ENCODE measurements at regions of chr1 and their contacts with region 1.

Region 1: GRCh38 chr1:110106013-110106941 is 6.0 kb upstream of the UBL4B start:
- DNase-seq: peak; percentile 78
- H3K4me3 ChIP-seq: no peak overlapping the region
- H3K27ac ChIP-seq: no peak overlapping the region
- H3K4me1 ChIP-seq: peaks cover 18% of the 10 kb centered on the region
- CTCF ChIP-seq: peak; percentile 90

Region 2: DNA sequence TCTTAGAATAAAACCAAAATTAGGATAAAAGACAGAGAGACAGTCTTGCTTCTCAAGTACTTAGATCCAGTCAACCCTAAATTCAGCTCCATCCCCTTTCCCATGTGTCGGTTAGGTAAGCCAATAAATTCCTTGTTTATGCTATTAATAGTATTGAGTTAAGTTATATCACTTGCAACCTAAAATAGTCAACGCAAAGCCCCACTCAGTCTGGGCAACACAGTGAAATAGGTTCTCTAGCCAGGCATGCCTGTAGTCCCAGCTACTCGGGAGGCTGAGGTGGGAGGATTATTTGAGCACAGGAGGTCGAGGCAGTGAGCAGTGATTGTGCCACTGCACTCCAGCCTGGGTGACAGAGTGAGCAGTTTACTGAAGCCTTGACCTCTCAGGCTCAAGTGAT is 1045.1 kb before region 1 on chr1:
- CTCF ChIA-PET with region 1: no interaction called
- POLR2A ChIA-PET with region 1: no interaction called
- intact Hi-C with region 1: no loop called
- DNase-seq: no peak
- H3K4me3 ChIP-seq: no peak overlapping the region
- H3K27ac ChIP-seq: no peak overlapping the region
- H3K4me1 ChIP-seq: no peaks in the 10 kb centered on the region
- CTCF ChIP-seq: no peak

Region 3: DNA sequence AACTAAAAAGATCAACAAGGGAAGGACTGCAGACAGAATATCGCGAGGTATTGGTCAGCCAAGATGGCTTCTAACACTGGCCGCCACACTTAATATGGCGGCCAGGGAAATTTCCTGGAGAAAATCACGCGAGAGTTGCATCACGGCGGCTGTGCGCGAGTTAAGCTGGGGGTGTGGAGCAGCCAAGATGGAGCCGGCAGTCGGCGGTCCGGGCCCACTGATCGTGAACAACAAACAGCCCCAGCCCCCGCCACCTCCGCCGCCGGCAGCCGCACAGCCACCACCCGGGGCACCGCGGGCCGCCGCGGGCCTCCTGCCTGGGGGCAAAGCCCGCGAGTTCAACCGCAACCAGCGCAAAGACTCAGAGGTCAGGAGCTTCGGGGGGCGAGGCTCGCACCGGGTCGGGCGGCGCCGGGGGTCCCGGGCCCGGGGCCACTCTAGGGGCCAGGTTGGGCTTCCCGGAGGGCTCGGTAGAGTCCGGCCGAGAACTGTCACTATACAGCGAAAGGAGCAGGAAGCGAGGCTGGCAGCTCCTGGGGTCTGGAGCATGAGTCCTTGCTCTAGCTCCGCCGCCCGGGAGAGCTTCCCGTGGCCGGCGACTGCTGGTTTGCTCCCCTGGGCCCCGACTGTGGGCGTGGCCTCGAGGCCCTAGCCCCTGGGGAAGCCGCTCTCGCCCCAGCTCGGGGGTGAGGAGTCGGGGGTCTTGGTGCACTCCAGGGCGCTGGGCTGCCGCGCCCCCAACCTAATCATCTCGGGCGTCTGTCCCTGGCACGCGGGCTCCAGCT is 71.6 kb before region 1 on chr1 and contains the start of gene STRIP1:
- CTCF ChIA-PET with region 1: no interaction called
- POLR2A ChIA-PET with region 1: interaction called, 3 read pairs
- intact Hi-C with region 1: loop called (anchors 1 kb)
- DNase-seq: peak; percentile 97
- H3K4me3 ChIP-seq: peak within 1 kb of the TSS; percentile 95
- H3K27ac ChIP-seq: peak within 1 kb of the TSS; percentile 43
- H3K4me1 ChIP-seq: peaks cover 37% of the 10 kb centered on the region
- CTCF ChIP-seq: no peak
- total RNA-seq, gene STRIP1: 33.1 and 45.5 TPM in 2 replicates

Region 4: DNA sequence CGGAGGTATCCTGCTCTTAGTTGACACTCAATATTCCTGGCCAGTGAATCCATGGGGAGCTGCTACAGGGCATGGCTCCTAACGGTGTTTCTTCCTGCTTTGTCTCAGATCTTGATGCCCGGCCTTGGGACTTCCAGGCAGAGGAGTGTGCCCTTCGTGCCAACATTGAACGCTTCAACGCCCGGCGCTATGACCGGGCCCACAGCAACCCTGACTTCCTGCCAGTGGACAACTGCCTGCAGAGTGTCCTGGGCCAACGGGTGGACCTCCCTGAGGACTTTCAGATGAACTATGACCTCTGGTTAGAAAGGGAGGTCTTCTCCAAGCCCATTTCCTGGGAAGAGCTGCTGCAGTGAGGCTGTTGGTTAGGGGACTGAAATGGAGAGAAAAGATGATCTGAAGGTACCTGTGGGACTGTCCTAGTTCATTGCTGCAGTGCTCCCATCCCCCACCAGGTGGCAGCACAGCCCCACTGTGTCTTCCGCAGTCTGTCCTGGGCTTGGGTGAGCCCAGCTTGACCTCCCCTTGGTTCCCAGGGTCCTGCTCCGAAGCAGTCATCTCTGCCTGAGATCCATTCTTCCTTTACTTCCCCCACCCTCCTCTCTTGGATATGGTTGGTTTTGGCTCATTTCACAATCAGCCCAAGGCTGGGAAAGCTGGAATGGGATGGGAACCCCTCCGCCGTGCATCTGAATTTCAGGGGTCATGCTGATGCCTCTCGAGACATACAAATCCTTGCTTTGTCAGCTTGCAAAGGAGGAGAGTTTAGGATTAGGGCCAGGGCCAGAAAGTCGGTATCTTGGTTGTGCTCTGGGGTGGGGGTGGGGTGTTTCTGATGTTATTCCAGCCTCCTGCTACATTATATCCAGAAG is 52.5 kb before region 1 on chr1:
- CTCF ChIA-PET with region 1: interaction called, 7 read pairs
- POLR2A ChIA-PET with region 1: interaction called, 5 read pairs
- intact Hi-C with region 1: loop called (anchors 1 kb)
- DNase-seq: peak; percentile 63
- H3K4me3 ChIP-seq: no peak overlapping the region
- H3K27ac ChIP-seq: no peak overlapping the region
- H3K4me1 ChIP-seq: no peaks in the 10 kb centered on the region
- CTCF ChIP-seq: peak; percentile 96

Region 5: DNA sequence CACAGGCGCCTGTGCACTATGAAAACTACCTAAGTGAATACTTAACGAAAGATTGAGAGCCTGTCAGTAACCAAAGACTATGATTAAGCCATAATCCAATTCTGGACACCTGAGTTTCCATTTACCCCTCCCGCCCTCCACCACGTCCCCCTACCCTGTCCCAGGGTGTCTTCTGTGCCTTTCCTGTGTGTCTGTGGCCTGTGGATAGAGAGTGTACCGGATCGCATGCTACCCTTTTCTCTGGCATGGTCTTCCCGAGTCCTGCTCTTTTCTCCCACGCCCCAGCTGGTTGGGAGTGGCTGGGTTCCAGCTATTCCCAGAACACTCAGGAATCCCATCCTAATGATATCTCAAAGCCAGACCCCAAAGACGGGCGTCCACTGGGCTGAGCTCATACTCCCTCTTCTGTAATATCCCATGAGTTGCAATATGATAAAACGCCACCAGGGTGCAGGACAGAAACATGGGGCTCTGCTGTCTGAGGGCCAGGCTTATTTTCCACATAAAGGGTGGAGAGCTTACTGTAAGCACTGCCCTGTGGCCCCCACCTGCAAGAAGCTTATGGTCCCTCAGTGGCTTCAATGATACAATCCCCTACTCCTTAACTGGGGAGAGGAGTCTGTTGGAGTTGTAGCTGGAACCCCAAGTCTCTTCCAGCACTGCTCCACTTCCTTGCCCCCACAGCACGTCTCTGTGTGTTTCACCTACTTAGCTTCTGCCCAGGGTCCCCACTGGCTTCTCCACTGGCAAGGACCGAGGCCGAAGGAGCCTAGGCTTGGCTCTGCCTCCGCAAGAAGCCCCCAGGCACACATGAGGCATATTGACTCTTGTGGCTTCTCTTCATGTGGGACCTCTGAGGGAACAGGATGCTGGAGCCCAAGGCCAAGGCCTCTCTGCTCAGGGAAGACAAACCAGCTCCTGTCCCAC is 18.2 kb before region 1 on chr1:
- CTCF ChIA-PET with region 1: interaction called, 18 read pairs
- POLR2A ChIA-PET with region 1: interaction called, 8 read pairs
- intact Hi-C with region 1: loop called (anchors 1 kb)
- DNase-seq: peak; percentile 68
- H3K4me3 ChIP-seq: no peak overlapping the region
- H3K27ac ChIP-seq: no peak overlapping the region
- H3K4me1 ChIP-seq: no peaks in the 10 kb centered on the region
- CTCF ChIP-seq: peak; percentile 84

Measured in OCI-LY7 (cell line).